ENCODE measurements at regions of chr13 and their contacts with region 1.

Region 1: GRCh38 chr13:44899967-44900366 is 89.3 kb downstream of the NUFIP1 start:
- DNase-seq: no peak
- H3K4me3 ChIP-seq: no peak overlapping the region
- H3K27ac ChIP-seq: no peak overlapping the region
- H3K4me1 ChIP-seq: peaks cover 0 to 20% (median 8%) of the 10 kb centered on the region in 4 donors
- H3K27me3 ChIP-seq: no peaks in the 10 kb centered on the region
- CTCF ChIP-seq: no peak
- EP300 ChIP-seq: no peak
- POLR2A ChIP-seq: no peak

Region 2: DNA sequence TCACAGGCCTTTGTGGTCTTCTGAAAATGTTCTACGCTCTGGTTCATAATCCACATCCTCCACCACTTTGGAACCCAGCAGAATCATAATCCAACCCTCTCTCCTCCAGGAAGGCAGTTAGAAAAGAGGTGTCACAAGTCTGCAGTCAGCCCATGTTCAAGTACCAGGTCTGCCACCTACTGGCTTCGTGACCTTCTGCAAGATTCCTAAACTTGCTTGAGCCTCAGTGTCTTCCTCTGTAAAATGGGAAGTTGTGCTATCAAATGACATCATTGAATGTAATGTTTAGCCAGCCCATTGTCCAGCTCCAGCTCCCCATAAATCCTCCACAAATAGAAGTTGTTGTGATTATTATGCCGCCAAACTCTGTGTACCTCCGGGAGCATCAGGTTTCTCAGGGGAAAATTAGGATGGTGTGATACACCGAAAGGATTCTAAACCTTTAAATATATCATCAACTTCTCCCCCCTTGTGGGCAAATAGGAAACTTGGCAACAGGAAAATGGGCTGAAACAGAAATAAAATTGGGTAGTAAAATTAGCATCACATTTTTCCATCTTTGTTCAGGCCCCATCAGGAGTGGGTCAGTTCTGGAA is 20.4 kb before region 1 on chr13:
- in situ Hi-C with region 1: no loop called
- intact Hi-C with region 1: loop called (anchors 1 kb)
- DNase-seq: peak; percentile 31
- H3K4me3 ChIP-seq: no peak overlapping the region
- H3K27ac ChIP-seq: no peak overlapping the region
- H3K4me1 ChIP-seq: no peaks in the 10 kb centered on the region
- H3K27me3 ChIP-seq: no peaks in the 10 kb centered on the region
- CTCF ChIP-seq: peak; percentile 29 to 55 (median 37)
- EP300 ChIP-seq: no peak
- POLR2A ChIP-seq: no peak